AG04449 (cell line): ENCODE measurements at regions of chr3 and their contacts with region 1.

Region 1: GRCh38 chr3:129160891-129161859 is at the start of gene ISY1:
- DNase-seq: peak; percentile 63
- H3K4me3 ChIP-seq: peak within 1 kb of the TSS; percentile 80
- CTCF ChIP-seq: peak; percentile 89

Region 2: DNA sequence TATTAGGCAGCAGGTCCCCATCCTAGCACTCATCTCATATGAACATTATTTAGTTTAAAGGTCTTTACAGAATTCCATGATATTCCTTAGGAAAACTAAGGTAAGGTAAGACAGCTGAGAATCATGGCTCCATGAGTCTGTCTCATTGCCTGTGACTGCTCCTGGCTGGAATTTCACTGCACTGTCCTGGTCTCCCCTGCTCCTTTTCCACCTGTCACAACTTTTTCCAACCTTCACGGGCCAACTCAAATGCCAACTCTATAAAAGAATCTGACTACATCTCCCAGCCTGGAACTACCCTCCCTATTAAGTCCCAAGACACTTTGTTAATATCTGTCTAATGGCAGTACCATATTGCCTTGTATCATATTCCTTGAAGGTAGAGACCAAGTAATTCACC is 14.9 kb after region 1 on chr3:
- CTCF ChIA-PET with region 1: interaction called, 20 read pairs
- POLR2A ChIA-PET with region 1: interaction called, 4 read pairs
- DNase-seq: no peak
- H3K4me3 ChIP-seq: no peak overlapping the region
- CTCF ChIP-seq: no peak

Region 3: DNA sequence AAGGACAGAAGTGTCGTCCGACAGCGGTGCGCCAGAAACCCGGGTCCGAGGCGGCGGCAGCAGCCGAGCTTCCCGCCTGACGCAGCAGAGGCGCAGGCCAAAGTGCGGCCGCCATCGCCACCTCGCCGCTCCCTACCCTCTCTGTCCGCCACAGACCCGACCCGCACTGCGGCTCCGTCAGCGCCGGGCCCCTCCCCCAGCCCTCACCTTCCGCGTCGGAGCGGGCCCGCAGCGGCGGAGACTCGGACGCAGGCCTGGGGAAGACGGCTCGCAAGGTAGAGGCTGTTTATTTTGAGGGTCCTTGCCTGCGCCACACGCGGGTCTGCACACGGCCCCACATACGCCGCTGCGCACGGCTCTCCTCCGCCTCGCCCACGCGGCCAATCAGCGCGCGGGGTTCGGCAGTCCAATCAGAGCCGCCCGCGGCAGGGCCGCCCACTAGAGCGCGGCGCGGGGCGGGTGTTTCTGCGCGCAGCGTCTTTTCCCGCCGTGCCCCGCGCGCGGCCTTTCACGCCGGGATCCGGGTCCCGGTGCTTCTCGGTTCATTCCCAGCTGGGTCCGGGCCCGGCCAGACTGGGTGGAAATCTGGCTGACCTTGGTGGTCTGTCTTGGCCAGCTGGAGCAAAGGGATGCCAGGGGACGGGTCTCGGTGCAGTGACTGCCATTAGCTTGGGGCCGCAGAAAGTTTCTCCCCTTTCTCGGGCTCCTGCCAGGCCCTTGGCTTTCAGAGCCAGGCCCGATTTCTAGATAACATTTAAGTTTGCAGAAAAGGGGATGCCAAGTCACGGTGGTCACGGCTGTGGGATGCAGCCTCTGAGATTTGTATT is 22.6 kb after region 1 on chr3 and contains the start of gene CNBP:
- CTCF ChIA-PET with region 1: interaction called, 20 read pairs
- POLR2A ChIA-PET with region 1: interaction called, 5 read pairs
- DNase-seq: peak; percentile 46
- H3K4me3 ChIP-seq: peak within 1 kb of the TSS; percentile 96
- CTCF ChIP-seq: no peak